HepG2 (cell line): ENCODE measurements at regions of chr17 and their contacts with region 1.

Region 1: DNA sequence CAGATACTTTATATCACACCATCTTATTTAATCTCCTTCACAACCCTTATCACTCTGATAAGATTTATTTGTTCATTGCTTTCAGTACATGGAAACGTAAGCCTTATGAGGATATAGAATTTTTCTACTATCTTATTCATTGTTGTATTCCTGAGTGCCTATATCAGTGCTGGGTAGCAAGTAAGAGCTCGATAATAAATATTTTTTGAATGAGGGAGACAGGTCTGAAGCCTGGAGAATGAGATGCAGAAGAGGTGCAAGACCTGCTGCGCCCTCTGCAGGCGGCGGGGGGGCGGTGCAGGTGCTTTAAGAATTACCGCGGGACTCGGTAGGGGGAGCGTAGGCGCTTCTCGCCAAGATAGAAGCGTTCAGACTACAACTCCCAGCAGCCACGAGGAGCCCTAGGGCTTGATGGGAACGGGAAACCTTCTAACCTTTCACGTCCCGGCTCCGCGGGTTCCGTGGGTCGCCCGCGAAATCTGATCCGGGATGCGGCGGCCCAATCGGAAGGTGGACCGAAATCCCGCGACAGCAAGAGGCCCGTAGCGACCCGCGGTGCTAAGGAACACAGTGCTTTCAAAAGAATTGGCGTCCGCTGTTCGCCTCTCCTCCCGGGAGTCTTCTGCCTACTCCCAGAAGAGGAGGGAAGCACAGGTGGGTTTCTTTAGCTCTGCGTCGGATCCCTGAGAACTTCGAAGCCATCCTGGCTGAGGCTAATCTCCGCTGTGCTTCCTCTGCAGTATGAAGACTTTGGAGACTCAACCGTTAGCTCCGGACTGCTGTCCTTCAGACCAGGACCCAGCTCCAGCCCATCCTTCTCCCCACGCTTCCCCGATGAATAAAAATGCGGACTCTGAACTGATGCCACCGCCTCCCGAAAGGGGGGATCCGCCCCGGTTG is at the start of gene WRAP53:
- DNase-seq: peak; percentile 98
- ATAC-seq: peak; percentile 90
- H3K4me3 ChIP-seq: peak within 1 kb of the TSS; percentile 93 to 98 (median 95)
- H3K27ac ChIP-seq: peak within 1 kb of the TSS; percentile 95
- H3K4me1 ChIP-seq: peaks cover 33% of the 10 kb centered on the region
- H3K27me3 ChIP-seq: no peaks in the 10 kb centered on the region; a peak in 1 of 5 replicates
- CTCF ChIP-seq: peak; percentile 94
- EP300 ChIP-seq: no peak
- POLR2A ChIP-seq: peak; percentile 79 to 83
- RAD21 ChIP-seq: peak; percentile 76
- total RNA-seq, gene WRAP53: 18.1 and 19.5 TPM in 2 replicates

Region 2: GRCh38 chr17:7561028-7561575 is 127.1 kb before region 1 on chr17:
- CTCF ChIA-PET with region 1: no interaction called
- POLR2A ChIA-PET with region 1: interaction called, 10 read pairs
- in situ Hi-C with region 1: no loop called
- intact Hi-C with region 1: no loop called
- DNase-seq: peak; percentile 77
- ATAC-seq: peak; percentile 77
- H3K4me3 ChIP-seq: peak overlapping the region; percentile 90 to 94 (median 92)
- H3K27ac ChIP-seq: peak overlapping the region; percentile 75
- H3K4me1 ChIP-seq: peaks cover 67% of the 10 kb centered on the region
- H3K27me3 ChIP-seq: no peaks in the 10 kb centered on the region; a peak in 1 of 5 replicates
- CTCF ChIP-seq: peak; percentile 96
- EP300 ChIP-seq: no peak
- POLR2A ChIP-seq: peak in 1 of 2 experiments; percentile 51; a peak in 1 of 4 replicates
- RAD21 ChIP-seq: peak; percentile 90

Region 3: GRCh38 chr17:7583253-7584109 is 104.7 kb before region 1 on chr17 and contains the start of gene MPDU1:
- CTCF ChIA-PET with region 1: interaction called, 3 read pairs
- POLR2A ChIA-PET with region 1: interaction called, 89 read pairs
- in situ Hi-C with region 1: loop called (anchors 5 kb)
- intact Hi-C with region 1: no loop called
- DNase-seq: peak; percentile 81
- ATAC-seq: peak; percentile 22
- H3K4me3 ChIP-seq: peak within 1 kb of the TSS; percentile 73 to 83 (median 77)
- H3K27ac ChIP-seq: peak within 1 kb of the TSS; percentile 96
- H3K4me1 ChIP-seq: peaks cover 55% of the 10 kb centered on the region
- H3K27me3 ChIP-seq: no peaks in the 10 kb centered on the region; a peak in 1 of 5 replicates
- CTCF ChIP-seq: peak; percentile 20; the same call in 1 of the 2 replicates
- EP300 ChIP-seq: 0 out of 4 replicates have a peak, but pooled peaks of 1 of the 2 experiments have one; percentile 18
- POLR2A ChIP-seq: peak; percentile 79 to 98
- RAD21 ChIP-seq: no peak
- total RNA-seq, gene MPDU1: 59.5 and 112 TPM in 2 replicates

Region 4: DNA sequence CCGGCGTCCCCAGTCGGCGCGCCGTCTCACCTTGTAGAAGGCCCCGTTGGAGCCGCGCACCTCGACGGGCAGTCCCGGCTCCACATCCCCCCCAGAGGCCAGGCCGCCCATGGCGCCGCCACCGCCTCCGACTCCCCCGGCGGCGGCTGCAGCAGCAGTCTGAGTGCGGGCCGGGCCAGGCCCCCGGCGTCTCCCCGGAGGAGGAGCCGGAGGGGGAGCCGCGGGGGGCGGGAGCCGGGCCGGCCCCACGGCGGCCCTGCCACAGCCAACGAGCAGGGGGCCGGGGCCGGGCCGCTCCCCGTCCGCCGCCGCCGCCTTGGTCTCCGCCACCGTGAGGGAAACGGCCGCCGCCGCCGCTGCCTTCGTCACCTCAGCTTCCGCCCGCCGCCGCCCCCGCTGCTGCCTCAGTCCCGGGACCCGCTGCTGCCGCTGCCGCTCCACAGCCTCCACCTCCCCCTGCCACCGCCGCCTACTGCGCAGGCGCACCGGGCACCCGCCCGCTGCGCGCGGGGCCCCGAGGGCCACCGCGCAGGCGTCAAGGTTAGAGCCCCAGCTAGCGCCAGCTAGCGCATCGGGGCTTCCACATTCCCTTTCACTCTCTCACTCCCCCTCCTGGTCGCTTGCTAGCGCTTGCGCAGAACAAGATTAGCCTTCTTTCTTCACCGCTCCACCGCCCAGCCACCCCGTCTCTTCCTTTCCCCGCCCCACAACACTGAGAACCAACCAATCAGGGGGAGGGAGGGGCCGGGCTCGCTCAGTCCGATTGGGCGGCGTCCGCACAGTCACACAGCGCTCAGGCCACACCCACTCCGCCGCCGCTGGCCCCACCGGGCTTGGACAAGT is 73.5 kb before region 1 on chr17 and contains the start of gene FXR2:
- CTCF ChIA-PET with region 1: no interaction called
- POLR2A ChIA-PET with region 1: interaction called, 52 read pairs
- in situ Hi-C with region 1: no loop called
- intact Hi-C with region 1: no loop called
- DNase-seq: peak; percentile 99
- ATAC-seq: peak; percentile 94
- H3K4me3 ChIP-seq: peak within 1 kb of the TSS; percentile 64 to 92 (median 89)
- H3K27ac ChIP-seq: peak within 1 kb of the TSS; percentile 78
- H3K4me1 ChIP-seq: peaks cover 53% of the 10 kb centered on the region
- H3K27me3 ChIP-seq: no peaks in the 10 kb centered on the region
- CTCF ChIP-seq: peak; percentile 80
- EP300 ChIP-seq: peak in 1 of 2 experiments; percentile 22; a peak in 1 of 4 replicates
- POLR2A ChIP-seq: peak in 1 of 2 experiments; percentile 64
- RAD21 ChIP-seq: peak; percentile 58
- total RNA-seq, gene FXR2: 13.4 and 24.4 TPM in 2 replicates

Region 5: GRCh38 chr17:7632492-7632894 is 55.7 kb before region 1 on chr17:
- CTCF ChIA-PET with region 1: interaction called, 12 read pairs
- POLR2A ChIA-PET with region 1: interaction called, 56 read pairs
- in situ Hi-C with region 1: loop called (anchors 5 kb)
- intact Hi-C with region 1: loop called (anchors 5 kb)
- DNase-seq: no peak
- ATAC-seq: peak; percentile 37
- H3K4me3 ChIP-seq: no peak overlapping the region
- H3K27ac ChIP-seq: peak overlapping the region; percentile 46
- H3K4me1 ChIP-seq: peaks cover 55% of the 10 kb centered on the region
- H3K27me3 ChIP-seq: no peaks in the 10 kb centered on the region; a peak in 1 of 5 replicates
- CTCF ChIP-seq: peak; percentile 55
- EP300 ChIP-seq: no peak
- POLR2A ChIP-seq: no peak
- RAD21 ChIP-seq: no peak

Region 6: GRCh38 chr17:7673239-7673638 is 14.9 kb before region 1 on chr17:
- CTCF ChIA-PET with region 1: no interaction called
- POLR2A ChIA-PET with region 1: interaction called, 11 read pairs
- in situ Hi-C with region 1: no loop called
- intact Hi-C with region 1: no loop called
- DNase-seq: peak; percentile 27
- ATAC-seq: no peak
- H3K4me3 ChIP-seq: no peak overlapping the region
- H3K27ac ChIP-seq: no peak overlapping the region
- H3K4me1 ChIP-seq: no peaks in the 10 kb centered on the region
- H3K27me3 ChIP-seq: no peaks in the 10 kb centered on the region; a peak in 1 of 5 replicates
- CTCF ChIP-seq: peak; percentile 72
- EP300 ChIP-seq: no peak
- POLR2A ChIP-seq: no peak
- RAD21 ChIP-seq: no peak

Region 7: GRCh38 chr17:7732981-7733539 is 44.9 kb after region 1 on chr17:
- CTCF ChIA-PET with region 1: no interaction called
- POLR2A ChIA-PET with region 1: no interaction called
- in situ Hi-C with region 1: no loop called
- intact Hi-C with region 1: no loop called
- DNase-seq: no peak
- ATAC-seq: no peak
- H3K4me3 ChIP-seq: no peak overlapping the region
- H3K27ac ChIP-seq: no peak overlapping the region
- H3K4me1 ChIP-seq: no peaks in the 10 kb centered on the region
- H3K27me3 ChIP-seq: peaks cover 11 to 37% of the 10 kb centered on the region in 2 experiments
- CTCF ChIP-seq: no peak
- EP300 ChIP-seq: no peak
- POLR2A ChIP-seq: no peak
- RAD21 ChIP-seq: no peak